T-cell (primary cell): ENCODE measurements at regions of chr10 and their contacts with region 1.

Region 1: GRCh38 chr10:103685880-103686669 is 169.3 kb downstream of the SH3PXD2A start:
- DNase-seq: peak; percentile 30 to 86 (median 68)
- ATAC-seq: peak; percentile 85 to 90 (median 88)
- H3K4me3 ChIP-seq: no peak overlapping the region
- H3K4me3 Mint-ChIP-seq: no peak overlapping the region
- H3K27ac ChIP-seq: no peak overlapping the region
- H3K27ac Mint-ChIP-seq: peak overlapping the region in 1 of 2 donors; percentile 41
- H3K4me1 ChIP-seq: no peaks in the 10 kb centered on the region
- H3K4me1 Mint-ChIP-seq: peaks cover 0 to 3% (median 0%) of the 10 kb centered on the region in 3 donors
- H3K27me3 ChIP-seq: no peaks in the 10 kb centered on the region
- H3K27me3 Mint-ChIP-seq: no peaks in the 10 kb centered on the region

Region 2: GRCh38 chr10:102313221-102313896 is 1372.7 kb before region 1 on chr10:
- CTCF ChIA-PET with region 1: no interaction called
- POLR2A ChIA-PET with region 1: interaction called in 1 of 2 experiments, 10 read pairs
- DNase-seq: no peak
- ATAC-seq: no peak
- H3K4me3 ChIP-seq: no peak overlapping the region
- H3K4me3 Mint-ChIP-seq: no peak overlapping the region
- H3K27ac ChIP-seq: no peak overlapping the region
- H3K27ac Mint-ChIP-seq: no peak overlapping the region
- H3K4me1 ChIP-seq: peaks cover 0 to 2% of the 10 kb centered on the region in 2 experiments
- H3K4me1 Mint-ChIP-seq: peaks cover 39 to 51% (median 46%) of the 10 kb centered on the region in 3 donors
- H3K27me3 ChIP-seq: no peaks in the 10 kb centered on the region
- H3K27me3 Mint-ChIP-seq: no peaks in the 10 kb centered on the region

Region 3: DNA sequence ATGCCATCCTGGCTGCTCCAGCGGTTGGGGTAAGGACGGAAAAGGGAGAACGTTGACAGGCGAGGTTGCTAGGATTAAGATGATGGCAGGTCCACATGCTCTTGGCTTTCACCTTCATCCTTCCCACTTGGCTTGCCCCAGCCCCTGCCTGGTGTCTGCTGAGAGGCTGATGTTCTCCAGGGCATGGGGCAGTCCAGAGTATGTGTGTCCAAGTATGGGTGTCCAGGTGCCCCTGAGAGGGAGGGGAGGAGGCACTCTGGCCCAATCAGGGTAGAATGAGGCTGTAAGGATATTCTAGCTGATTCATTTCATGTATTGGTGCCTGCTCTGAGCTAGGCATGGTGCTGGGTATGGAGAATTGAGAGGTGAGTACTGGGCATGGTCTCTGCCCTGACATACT is 180.0 kb before region 1 on chr10:
- CTCF ChIA-PET with region 1: interaction called in 1 of 2 experiments, 12 read pairs
- POLR2A ChIA-PET with region 1: no interaction called
- DNase-seq: no peak
- ATAC-seq: no peak
- H3K4me3 ChIP-seq: no peak overlapping the region
- H3K4me3 Mint-ChIP-seq: no peak overlapping the region
- H3K27ac ChIP-seq: no peak overlapping the region
- H3K27ac Mint-ChIP-seq: no peak overlapping the region
- H3K4me1 ChIP-seq: peaks cover 0 to 21% of the 10 kb centered on the region in 2 experiments
- H3K4me1 Mint-ChIP-seq: peaks cover 7 to 11% (median 10%) of the 10 kb centered on the region in 3 donors
- H3K27me3 ChIP-seq: peaks cover 0 to 56% of the 10 kb centered on the region in 2 experiments
- H3K27me3 Mint-ChIP-seq: peaks cover 14 to 16% of the 10 kb centered on the region in 2 donors

Region 4: GRCh38 chr10:103605359-103606095 is 80.5 kb before region 1 on chr10:
- CTCF ChIA-PET with region 1: interaction called, 18 read pairs
- POLR2A ChIA-PET with region 1: no interaction called
- DNase-seq: peak in 25 of 35 experiments; percentile 10 to 65 (median 27)
- ATAC-seq: no peak
- H3K4me3 ChIP-seq: no peak overlapping the region
- H3K4me3 Mint-ChIP-seq: no peak overlapping the region
- H3K27ac ChIP-seq: no peak overlapping the region
- H3K27ac Mint-ChIP-seq: no peak overlapping the region
- H3K4me1 ChIP-seq: no peaks in the 10 kb centered on the region
- H3K4me1 Mint-ChIP-seq: no peaks in the 10 kb centered on the region
- H3K27me3 ChIP-seq: peaks cover 0 to 3% of the 10 kb centered on the region in 2 experiments
- H3K27me3 Mint-ChIP-seq: no peaks in the 10 kb centered on the region

Region 5: DNA sequence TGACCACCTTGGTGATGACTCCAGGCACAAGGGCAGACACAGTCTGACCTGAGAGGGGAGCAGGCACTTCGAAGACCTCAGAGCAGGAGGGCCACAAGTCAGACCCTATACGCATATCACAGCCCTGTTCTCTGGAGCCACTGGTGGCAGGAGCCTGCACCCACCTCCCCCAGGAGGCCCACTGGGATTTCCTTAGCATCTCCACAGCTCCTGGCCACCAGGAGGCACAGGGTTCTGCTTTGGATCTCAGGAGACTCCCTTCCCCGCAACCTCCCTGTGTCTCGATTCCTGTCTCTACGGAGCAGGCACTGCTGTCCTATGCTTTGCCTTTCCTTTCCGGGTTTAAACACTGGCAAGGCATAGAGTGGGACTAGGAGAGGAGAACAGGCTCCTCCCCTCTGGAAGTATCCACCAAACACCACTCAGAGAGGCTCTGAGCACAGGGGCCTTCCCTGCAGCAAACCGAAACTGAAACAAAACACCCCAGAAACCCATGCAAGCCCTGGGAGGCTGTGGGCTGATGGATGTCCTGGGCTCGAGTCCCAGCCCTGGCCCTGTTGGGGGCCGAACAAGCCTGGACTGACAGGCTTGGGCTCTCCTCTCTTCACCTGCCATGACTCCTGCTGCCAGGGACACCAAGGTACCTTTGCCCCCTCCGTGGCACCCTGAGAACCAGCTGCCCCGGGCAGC is 26.3 kb before region 1 on chr10:
- CTCF ChIA-PET with region 1: interaction called in 1 of 2 experiments, 12 read pairs
- POLR2A ChIA-PET with region 1: interaction called in 1 of 2 experiments, 3 read pairs
- DNase-seq: peak in 34 of 35 experiments; percentile 26 to 74 (median 45)
- ATAC-seq: peak; percentile 77 to 81 (median 78)
- H3K4me3 ChIP-seq: peak overlapping the region; percentile 84 to 87
- H3K4me3 Mint-ChIP-seq: peak overlapping the region; percentile 88 to 90 (median 88)
- H3K27ac ChIP-seq: peak overlapping the region; percentile 79
- H3K27ac Mint-ChIP-seq: peak overlapping the region; percentile 87 to 93
- H3K4me1 ChIP-seq: peaks cover 0 to 34% of the 10 kb centered on the region in 2 experiments
- H3K4me1 Mint-ChIP-seq: peaks cover 17 to 29% (median 20%) of the 10 kb centered on the region in 3 donors
- H3K27me3 ChIP-seq: no peaks in the 10 kb centered on the region
- H3K27me3 Mint-ChIP-seq: no peaks in the 10 kb centered on the region